ENCODE measurements at regions of chr11 and their contacts with region 1.

Region 1: GRCh38 chr11:29184939-29185890 is 831.6 kb downstream of the KCNA4 start:
- DNase-seq: no peak
- ATAC-seq: peak in 1 of 4 donors; percentile 20
- H3K4me3 ChIP-seq: no peak overlapping the region
- H3K27ac ChIP-seq: no peak overlapping the region
- H3K4me1 ChIP-seq: no peaks in the 10 kb centered on the region
- H3K27me3 ChIP-seq: no peaks in the 10 kb centered on the region
- CTCF ChIP-seq: no peak
- POLR2A ChIP-seq: no peak

Region 2: DNA sequence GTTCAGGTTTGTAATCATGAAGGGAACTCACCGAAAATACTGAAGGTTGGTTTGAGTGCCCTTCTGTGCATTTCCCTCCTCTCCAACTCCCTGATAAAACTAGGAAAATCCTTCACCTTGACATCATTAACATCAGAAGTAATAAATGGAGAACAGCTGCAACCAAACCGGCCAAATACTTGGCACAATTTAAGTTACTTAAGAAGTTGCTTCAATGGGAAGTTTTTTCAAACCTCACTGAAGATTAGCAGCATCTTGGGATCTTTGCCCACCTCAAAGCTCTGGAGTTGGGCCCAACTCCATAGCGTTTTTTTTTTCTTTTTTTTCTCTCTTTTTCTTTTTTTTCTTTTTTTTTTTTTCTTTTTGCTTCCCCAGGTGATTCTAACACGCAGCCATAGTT is 46.8 kb after region 1 on chr11:
- intact Hi-C with region 1: loop called in 1 of 10 experiments (anchors 5 kb)
- DNase-seq: no peak
- ATAC-seq: no peak
- H3K4me3 ChIP-seq: no peak overlapping the region
- H3K27ac ChIP-seq: no peak overlapping the region
- H3K4me1 ChIP-seq: no peaks in the 10 kb centered on the region
- H3K27me3 ChIP-seq: no peaks in the 10 kb centered on the region
- CTCF ChIP-seq: no peak
- POLR2A ChIP-seq: no peak

Measured in heart left ventricle (tissue), 16 donors.